MCF 10A (cell line): ENCODE measurements at regions of chr18 and their contacts with region 1.

Region 1: DNA sequence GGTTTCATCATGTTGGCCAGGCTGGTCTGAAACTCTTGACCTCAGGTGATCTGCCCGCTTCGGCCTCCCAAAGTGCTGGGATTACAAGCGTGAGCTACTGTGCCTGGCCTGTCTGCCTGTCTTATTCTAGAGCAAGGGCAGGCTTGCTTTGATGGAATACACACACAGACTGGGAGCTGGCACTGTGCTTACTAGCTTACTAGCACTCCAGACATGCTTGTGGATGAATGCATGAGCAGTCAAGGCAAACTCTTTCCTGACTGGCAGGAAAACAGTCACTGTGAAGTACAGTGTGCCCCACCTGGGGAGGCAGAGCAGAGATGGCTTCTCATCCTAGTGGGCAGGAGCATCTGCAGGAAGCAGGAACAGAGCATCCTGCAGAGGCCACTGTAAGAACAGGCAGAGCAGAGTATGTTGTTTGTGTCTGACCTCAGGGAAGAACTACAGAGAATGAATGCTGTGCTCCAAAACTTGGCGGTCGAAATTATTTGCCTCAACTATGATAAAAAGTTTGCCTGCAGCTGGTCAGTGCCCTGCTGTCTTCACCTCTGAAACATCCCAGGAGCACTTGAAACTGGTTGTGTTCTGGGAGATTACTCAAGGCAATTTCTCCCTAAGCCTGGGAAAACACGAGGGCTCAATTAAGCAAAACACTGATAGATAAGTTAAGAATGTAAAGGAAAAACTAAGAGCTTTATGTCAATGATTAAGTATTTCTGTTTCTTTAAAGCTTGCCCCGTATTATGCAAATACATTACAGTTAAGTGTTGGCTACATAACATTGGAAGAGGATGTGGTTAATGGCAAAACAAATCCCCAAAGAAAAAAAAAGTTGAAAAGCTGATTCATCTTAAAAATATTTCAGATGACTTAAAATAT is 102.4 kb downstream of the VAPA start:
- DNase-seq: peak; percentile 54
- H3K4me3 Mint-ChIP-seq: no peak overlapping the region
- H3K27ac Mint-ChIP-seq: peak overlapping the region; percentile 0
- H3K4me1 Mint-ChIP-seq: peaks cover 31% of the 10 kb centered on the region
- H3K27me3 Mint-ChIP-seq: no peaks in the 10 kb centered on the region
- CTCF ChIP-seq: peak; percentile 16

Region 2: DNA sequence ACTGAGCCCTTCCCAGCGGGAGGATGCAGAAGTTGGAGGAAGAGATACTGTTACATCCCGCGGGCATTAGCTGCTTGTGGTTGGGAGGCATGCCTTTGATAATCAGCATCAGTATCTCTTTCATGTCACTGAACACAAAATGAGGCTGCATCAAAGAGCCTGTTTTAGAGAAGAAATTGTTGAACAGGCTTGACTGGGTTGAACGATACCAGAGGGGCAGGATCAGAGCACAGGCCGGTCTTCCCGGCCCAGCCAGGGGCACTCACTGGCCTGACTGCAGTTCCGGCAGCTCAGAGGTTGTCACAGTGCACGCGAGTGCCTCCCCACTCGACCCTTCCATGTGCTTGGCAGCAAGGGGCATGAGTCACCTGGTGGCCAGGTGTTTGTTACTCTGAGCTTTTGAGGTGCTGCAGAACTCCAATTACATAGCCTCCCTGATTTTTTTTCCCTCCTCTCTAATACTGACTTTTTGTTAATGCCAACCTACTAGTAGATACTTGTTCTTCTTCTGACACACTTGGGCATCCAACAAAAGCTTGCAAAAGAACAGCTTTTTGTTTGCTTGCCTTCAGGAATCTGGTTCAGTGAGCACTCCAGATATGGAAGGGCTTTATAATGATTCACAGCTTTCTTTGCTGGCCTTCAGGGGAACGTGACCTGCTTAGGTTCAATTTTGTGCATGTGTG is 19.3 kb after region 1 on chr18:
- CTCF ChIA-PET with region 1: interaction called, 5 read pairs
- POLR2A ChIA-PET with region 1: interaction called, 12 read pairs
- intact Hi-C with region 1: no loop called
- DNase-seq: peak; percentile 32
- H3K4me3 Mint-ChIP-seq: no peak overlapping the region
- H3K27ac Mint-ChIP-seq: no peak overlapping the region
- H3K4me1 Mint-ChIP-seq: peaks cover 7% of the 10 kb centered on the region
- H3K27me3 Mint-ChIP-seq: no peaks in the 10 kb centered on the region
- CTCF ChIP-seq: no peak

Region 3: DNA sequence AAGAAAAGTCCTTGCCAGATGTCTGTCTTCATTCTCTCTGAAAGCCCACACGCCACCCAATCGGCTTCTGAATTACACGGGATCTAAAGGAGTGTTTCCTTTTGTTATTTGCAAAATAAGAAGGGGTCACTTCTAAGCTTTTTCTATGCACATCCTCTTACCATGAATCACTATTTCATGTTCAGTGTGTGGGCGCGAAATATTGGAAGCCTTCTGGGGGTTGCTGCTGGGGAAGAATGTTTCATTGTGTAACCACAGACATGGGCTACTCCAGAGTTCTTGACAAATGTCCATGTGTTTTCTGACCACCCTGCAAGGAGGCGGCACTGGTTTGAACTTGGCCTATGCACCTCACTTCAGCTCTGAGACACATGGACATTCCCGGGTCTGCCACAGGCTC is 304.6 kb after region 1 on chr18:
- CTCF ChIA-PET with region 1: interaction called, 3 read pairs
- POLR2A ChIA-PET with region 1: no interaction called
- intact Hi-C with region 1: loop called (anchors 2 kb)
- DNase-seq: peak; percentile 13
- H3K4me3 Mint-ChIP-seq: no peak overlapping the region
- H3K27ac Mint-ChIP-seq: no peak overlapping the region
- H3K4me1 Mint-ChIP-seq: peaks cover 18% of the 10 kb centered on the region
- H3K27me3 Mint-ChIP-seq: no peaks in the 10 kb centered on the region
- CTCF ChIP-seq: no peak

Region 4: DNA sequence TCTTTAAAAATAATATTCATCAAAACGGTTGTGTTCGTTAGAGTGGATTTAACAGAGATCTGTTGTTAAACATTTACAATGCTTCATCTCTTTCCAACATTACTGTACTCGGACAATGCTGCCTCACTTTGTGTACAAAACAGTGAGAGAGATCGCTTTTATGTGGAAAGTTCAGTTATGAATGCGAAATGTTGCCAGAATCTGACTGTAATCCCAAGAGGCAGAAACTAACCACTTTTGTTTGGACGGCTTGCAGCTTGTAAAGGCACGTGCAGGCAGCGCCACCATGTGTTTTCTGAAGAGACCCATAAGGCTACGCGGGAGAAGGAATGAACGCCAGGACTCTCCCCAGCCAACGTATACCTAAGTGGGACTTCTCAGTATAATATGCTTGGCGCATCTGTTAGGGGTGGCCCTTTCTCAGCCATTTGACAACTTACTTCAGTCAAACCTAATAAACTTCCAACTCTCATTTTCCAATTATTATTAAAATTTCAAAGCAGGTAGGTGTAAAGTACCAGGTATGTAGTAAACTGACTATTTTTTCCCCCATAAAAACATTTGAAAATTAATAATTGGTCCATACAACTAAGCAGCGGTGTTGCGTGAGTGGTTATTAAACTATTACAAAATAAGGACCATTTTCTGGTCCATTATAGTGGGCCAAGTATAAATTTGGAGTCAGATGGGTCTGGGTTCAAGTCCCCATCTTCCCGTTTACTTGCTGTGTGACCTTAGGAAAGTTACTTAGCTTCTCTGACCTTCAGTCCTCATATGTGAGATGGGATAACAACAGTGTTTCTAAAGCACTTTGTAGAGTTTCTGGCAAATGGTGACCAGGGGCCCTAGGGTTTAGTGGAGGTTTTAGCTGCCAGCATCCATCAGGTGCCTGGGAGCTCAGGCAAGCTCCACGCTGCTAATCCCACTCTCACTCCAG is 504.1 kb after region 1 on chr18:
- CTCF ChIA-PET with region 1: interaction called, 17 read pairs
- POLR2A ChIA-PET with region 1: interaction called, 3 read pairs
- intact Hi-C with region 1: no loop called
- DNase-seq: peak; percentile 90
- H3K4me3 Mint-ChIP-seq: no peak overlapping the region
- H3K27ac Mint-ChIP-seq: no peak overlapping the region
- H3K4me1 Mint-ChIP-seq: no peaks in the 10 kb centered on the region
- H3K27me3 Mint-ChIP-seq: no peaks in the 10 kb centered on the region
- CTCF ChIP-seq: peak; percentile 83